ENCODE measurements at regions of chr17 and their contacts with region 1.

Region 1: GRCh38 chr17:77280980-77281903 is 140.5 kb downstream of the SEC14L1 start:
- DNase-seq: peak; percentile 80
- ATAC-seq: peak; percentile 47
- H3K4me3 ChIP-seq: peak overlapping the region; percentile 87
- H3K27ac ChIP-seq: peak overlapping the region; percentile 96
- H3K4me1 ChIP-seq: peaks cover 53% of the 10 kb centered on the region
- H3K27me3 ChIP-seq: no peaks in the 10 kb centered on the region
- CTCF ChIP-seq: peak; percentile 29

Region 2: DNA sequence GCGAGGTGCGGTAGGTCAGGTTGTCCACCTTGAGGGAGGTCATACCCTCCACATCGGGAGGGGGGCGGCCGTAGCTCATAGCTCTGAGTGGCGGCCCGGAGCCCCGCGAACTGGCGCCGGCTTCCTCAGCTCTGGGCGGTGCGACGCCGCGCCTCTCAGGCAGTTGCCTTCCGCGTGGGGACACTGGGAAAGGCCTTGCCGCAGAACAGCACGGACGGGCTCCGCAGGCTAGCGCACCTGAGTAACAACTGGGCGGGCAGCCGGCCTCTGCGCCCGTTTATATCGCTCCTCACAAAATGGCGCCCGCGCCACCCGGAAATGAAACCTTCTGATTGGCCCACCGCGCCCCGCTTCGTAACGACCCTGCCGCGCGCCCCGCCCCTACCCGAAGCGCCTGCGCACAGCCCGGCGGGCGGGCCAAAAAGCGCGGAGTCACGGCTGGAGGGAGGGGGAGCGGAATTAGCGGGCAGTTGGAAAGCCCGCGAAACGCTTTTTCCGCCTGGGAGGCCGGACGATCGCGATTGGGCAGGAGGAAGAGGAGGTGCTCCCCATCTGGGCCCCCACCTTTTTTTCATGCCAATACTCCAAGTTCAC is 544.1 kb before region 1 on chr17 and contains the start of gene SRSF2:
- CTCF ChIA-PET with region 1: no interaction called
- POLR2A ChIA-PET with region 1: no interaction called
- intact Hi-C with region 1: loop called (anchors 10 kb)
- DNase-seq: peak; percentile 100
- ATAC-seq: peak; percentile 68
- H3K4me3 ChIP-seq: peak within 1 kb of the TSS; percentile 89
- H3K27ac ChIP-seq: peak within 1 kb of the TSS; percentile 89
- H3K4me1 ChIP-seq: peaks cover 37% of the 10 kb centered on the region
- H3K27me3 ChIP-seq: no peaks in the 10 kb centered on the region
- CTCF ChIP-seq: no peak
- total RNA-seq, gene SRSF2: 562 and 859 TPM in 2 replicates

Region 3: DNA sequence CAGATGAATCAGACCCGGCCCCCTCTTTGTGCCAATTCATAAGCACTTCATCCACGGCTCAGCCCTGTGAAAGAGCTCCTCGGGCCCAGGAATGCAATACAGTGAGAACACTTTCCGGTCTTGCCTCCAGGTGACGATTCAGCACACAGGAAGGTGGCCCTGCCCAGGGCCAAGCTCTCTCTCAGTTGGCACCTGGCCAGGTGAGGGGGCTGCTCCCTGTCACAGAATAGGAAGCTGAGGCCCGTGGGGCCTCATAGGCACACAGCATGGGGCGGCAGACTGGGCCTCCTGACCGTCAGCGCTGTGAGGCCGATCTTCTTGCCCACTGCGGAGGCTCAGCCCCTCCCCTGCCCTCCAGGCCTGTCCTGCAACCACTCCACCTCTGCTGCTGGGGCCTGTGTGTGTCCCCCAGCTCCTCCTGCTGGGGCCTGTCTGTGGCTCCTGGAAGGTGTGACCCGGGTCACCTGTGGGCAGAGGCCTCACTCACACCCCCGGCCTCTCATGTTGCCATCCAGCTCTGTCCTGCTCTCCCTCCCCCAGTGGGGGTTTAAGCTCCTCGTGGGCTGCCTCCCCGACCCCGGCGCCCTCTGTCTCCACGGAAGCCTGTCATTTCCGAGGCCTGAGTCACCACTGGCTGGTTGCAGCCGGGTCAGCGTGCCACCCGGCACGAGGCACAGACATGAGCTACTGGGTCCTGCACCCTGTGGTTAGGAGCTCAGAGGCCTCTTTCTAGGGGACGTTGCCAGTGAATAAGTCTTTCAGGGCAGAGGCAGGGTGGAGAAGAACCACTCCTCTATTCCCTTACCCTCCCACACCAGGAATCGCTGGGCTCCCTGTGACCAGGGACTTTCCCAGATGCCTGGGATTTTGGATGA is 26.1 kb before region 1 on chr17:
- CTCF ChIA-PET with region 1: interaction called, 25 read pairs
- POLR2A ChIA-PET with region 1: interaction called, 141 read pairs
- intact Hi-C with region 1: loop called (anchors 1 kb)
- DNase-seq: peak; percentile 99
- ATAC-seq: peak; percentile 81
- H3K4me3 ChIP-seq: peak overlapping the region; percentile 0; the same call in 1 of the 2 replicates
- H3K27ac ChIP-seq: peak overlapping the region; percentile 90
- H3K4me1 ChIP-seq: peaks cover 35% of the 10 kb centered on the region
- H3K27me3 ChIP-seq: no peaks in the 10 kb centered on the region
- CTCF ChIP-seq: no peak

Region 4: GRCh38 chr17:77322514-77323412 is 41.5 kb after region 1 on chr17:
- CTCF ChIA-PET with region 1: interaction called, 3 read pairs
- POLR2A ChIA-PET with region 1: interaction called, 31 read pairs
- intact Hi-C with region 1: loop called (anchors 1 kb)
- DNase-seq: peak; percentile 99
- ATAC-seq: peak; percentile 76
- H3K4me3 ChIP-seq: peak overlapping the region; percentile 54
- H3K27ac ChIP-seq: peak overlapping the region; percentile 98
- H3K4me1 ChIP-seq: peaks cover 70% of the 10 kb centered on the region
- H3K27me3 ChIP-seq: no peaks in the 10 kb centered on the region
- CTCF ChIP-seq: no peak

Region 5: DNA sequence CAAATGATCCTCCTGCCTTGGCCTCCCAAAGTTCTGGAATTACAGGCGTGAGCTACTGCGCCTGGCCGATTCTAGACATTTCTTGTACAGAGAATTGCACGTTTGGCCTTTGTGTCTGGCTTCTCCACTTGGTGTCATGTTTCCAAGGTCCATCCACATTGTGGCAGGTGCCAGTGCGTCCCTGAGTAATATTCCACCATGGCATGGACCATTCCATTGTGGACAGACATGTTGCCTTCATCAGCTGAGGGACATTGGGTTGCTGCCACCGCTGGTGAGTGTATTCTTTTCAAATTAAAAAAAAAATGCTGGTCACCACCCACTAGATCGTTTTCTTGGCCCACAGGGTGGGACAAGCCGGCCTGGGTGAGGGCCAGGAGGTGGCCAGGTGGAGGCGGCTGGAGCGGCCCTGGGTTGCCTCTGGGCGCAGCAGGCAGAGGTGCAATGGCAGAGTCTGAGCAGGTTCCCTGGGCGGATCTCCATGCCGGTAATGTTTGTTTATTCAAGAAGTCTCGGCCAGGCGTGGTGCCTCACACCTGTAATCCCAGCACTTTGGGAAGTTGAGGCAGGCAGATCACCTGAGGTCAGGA is 133.7 kb after region 1 on chr17:
- CTCF ChIA-PET with region 1: no interaction called
- POLR2A ChIA-PET with region 1: interaction called, 11 read pairs
- intact Hi-C with region 1: no loop called
- DNase-seq: no peak
- ATAC-seq: no peak
- H3K4me3 ChIP-seq: no peak overlapping the region
- H3K27ac ChIP-seq: no peak overlapping the region
- H3K4me1 ChIP-seq: peaks cover 26% of the 10 kb centered on the region
- H3K27me3 ChIP-seq: no peaks in the 10 kb centered on the region
- CTCF ChIP-seq: no peak

Region 6: GRCh38 chr17:77424585-77425344 is 143.5 kb after region 1 on chr17:
- CTCF ChIA-PET with region 1: no interaction called
- POLR2A ChIA-PET with region 1: interaction called, 4 read pairs
- intact Hi-C with region 1: loop called (anchors 2 kb)
- DNase-seq: no peak
- ATAC-seq: no peak
- H3K4me3 ChIP-seq: no peak overlapping the region
- H3K27ac ChIP-seq: peak overlapping the region; percentile 87
- H3K4me1 ChIP-seq: peaks cover 87% of the 10 kb centered on the region
- H3K27me3 ChIP-seq: no peaks in the 10 kb centered on the region
- CTCF ChIP-seq: no peak